CD4-positive, alpha-beta memory T cell (primary cell): ENCODE measurements at regions of chr11 and their contacts with region 1.

Region 1: GRCh38 chr11:61129639-61130523 is 27.6 kb downstream of the CD5 start:
- DNase-seq: peak; percentile 87 to 91 (median 89)
- H3K4me3 ChIP-seq: peak overlapping the region in 1 of 2 donors; percentile 10
- H3K4me3 Mint-ChIP-seq: peak overlapping the region in 7 of 8 donors; percentile 3 to 66 (median 53)
- H3K27ac ChIP-seq: peak overlapping the region; percentile 19
- H3K27ac Mint-ChIP-seq: peak overlapping the region; percentile 14 to 87 (median 53)
- H3K4me1 ChIP-seq: peaks cover 18% of the 10 kb centered on the region
- H3K4me1 Mint-ChIP-seq: peaks cover 11 to 37% (median 16%) of the 10 kb centered on the region in 4 donors
- H3K27me3 ChIP-seq: no peaks in the 10 kb centered on the region
- H3K27me3 Mint-ChIP-seq: no peaks in the 10 kb centered on the region

Region 2: GRCh38 chr11:60492488-60493009 is 637.3 kb before region 1 on chr11 and contains the start of gene MS4A12:
- CTCF ChIA-PET with region 1: no interaction called
- POLR2A ChIA-PET with region 1: no interaction called
- intact Hi-C with region 1: no loop called
- DNase-seq: no peak
- H3K4me3 ChIP-seq: no peak within 1 kb of the TSS
- H3K4me3 Mint-ChIP-seq: no peak within 1 kb of the TSS
- H3K27ac ChIP-seq: no peak within 1 kb of the TSS
- H3K27ac Mint-ChIP-seq: peak within 1 kb of the TSS in 1 of 7 donors; percentile 34
- H3K4me1 ChIP-seq: no peaks in the 10 kb centered on the region
- H3K4me1 Mint-ChIP-seq: peaks cover 0 to 4% (median 0%) of the 10 kb centered on the region in 4 donors
- H3K27me3 ChIP-seq: no peaks in the 10 kb centered on the region
- H3K27me3 Mint-ChIP-seq: peaks cover 9 to 14% of the 10 kb centered on the region in 2 donors
- total RNA-seq, gene MS4A12: not detected

Region 3: DNA sequence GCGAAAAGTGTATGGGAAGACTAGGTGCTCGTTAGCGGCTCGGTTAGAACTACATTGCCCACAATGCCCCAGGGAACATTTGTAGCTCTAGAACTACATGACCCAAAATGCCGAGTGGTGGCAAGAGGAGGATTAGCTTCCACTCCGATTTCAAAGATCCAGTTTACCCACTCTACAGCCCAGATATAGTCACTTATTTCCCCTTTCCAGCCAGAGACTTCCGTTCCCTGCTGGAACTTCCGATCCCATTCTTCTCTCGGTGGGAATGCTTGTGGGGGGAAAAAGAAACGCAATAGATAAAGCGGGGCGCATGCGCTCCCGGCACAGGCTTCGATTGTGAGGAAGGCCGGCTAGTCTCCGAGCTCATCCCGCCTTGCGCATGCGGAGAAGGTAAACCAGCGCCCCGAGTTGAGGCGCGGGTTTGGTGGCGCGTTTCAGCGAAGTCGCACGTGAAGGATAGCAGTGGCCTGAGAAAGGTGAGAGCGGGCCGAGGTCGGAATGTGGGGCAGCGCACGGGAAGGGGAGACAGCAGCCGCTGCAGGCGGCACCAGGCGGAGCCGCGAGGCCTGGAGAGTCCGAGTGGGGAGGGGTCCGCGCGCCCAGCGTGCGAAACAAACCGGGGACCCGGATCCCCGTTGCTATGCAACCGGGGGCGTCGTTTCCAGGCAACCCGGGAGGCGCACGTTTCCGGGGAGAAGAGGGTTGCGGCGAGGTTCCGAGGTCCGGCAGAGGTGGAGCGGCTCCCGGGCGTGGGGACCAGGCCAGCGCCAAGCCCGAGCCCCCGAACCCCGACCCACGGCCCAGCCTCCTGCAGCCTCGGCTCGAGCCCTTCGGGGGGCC is 215.9 kb before region 1 on chr11 and contains the start of gene TMEM109:
- CTCF ChIA-PET with region 1: interaction called, 7 read pairs
- POLR2A ChIA-PET with region 1: interaction called, 22 read pairs
- intact Hi-C with region 1: loop called (anchors 2 kb)
- DNase-seq: peak; percentile 90 to 92 (median 91)
- H3K4me3 ChIP-seq: peak within 1 kb of the TSS; percentile 79 to 96
- H3K4me3 Mint-ChIP-seq: peak within 1 kb of the TSS; percentile 92 to 100 (median 98)
- H3K27ac ChIP-seq: peak within 1 kb of the TSS; percentile 96
- H3K27ac Mint-ChIP-seq: peak within 1 kb of the TSS; percentile 87 to 99 (median 98)
- H3K4me1 ChIP-seq: peaks cover 47% of the 10 kb centered on the region
- H3K4me1 Mint-ChIP-seq: peaks cover 31 to 65% (median 44%) of the 10 kb centered on the region in 4 donors
- H3K27me3 ChIP-seq: no peaks in the 10 kb centered on the region
- H3K27me3 Mint-ChIP-seq: no peaks in the 10 kb centered on the region
- total RNA-seq, gene TMEM109: 66.9 to 68.0 TPM

Region 4: DNA sequence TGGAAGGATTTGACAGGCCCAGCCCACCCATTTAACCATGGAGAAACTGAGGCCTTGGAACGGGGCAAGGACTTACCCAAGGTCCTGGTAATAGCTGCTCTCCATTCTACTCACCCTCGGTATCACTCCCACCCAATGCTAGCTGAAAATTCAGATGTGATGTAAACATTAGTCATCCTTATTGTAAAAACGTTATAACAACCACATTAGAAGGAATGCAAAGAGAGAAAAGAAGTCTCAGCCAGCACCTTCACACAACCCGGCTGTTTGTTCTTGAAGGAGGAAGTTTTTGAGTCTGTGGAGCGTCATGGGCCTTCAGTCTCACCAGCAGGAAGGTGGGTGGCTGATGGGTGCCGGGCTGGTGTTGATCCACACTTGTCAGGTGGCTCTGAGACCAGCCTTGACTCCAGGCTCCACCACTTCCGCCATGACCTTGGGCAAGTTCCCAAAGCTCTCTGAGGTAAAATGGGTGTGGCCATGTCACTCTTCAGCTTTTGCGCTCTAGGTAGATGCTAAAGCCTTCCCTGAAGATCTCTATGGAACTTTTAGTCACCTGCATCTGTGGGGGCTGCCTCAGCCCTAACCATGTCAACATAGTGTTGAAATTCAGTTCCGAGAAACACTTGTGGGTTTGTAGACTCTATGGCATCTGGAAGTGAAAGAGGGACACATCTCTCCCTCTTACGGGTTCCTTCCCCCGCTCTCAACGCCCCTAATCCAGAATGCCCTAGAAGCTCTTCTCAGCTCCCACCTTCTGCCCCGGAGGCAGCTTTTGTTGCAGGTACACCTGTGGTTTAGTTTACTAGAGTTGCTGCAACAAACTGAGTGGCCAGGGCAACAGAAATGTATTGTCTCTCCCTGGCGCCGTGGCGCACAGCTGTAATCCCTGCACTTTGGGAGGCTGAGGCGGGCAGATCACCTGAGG is 143.6 kb before region 1 on chr11:
- CTCF ChIA-PET with region 1: interaction called, 6 read pairs
- POLR2A ChIA-PET with region 1: interaction called, 18 read pairs
- intact Hi-C with region 1: loop called (anchors 1 kb)
- DNase-seq: peak; percentile 92 to 99 (median 97)
- H3K4me3 ChIP-seq: peak overlapping the region in 1 of 2 donors; percentile 39
- H3K4me3 Mint-ChIP-seq: peak overlapping the region; percentile 61 to 87 (median 78)
- H3K27ac ChIP-seq: peak overlapping the region; percentile 92
- H3K27ac Mint-ChIP-seq: peak overlapping the region; percentile 88 to 100 (median 97)
- H3K4me1 ChIP-seq: peaks cover 94% of the 10 kb centered on the region
- H3K4me1 Mint-ChIP-seq: peaks cover 69 to 96% (median 86%) of the 10 kb centered on the region in 4 donors
- H3K27me3 ChIP-seq: no peaks in the 10 kb centered on the region
- H3K27me3 Mint-ChIP-seq: no peaks in the 10 kb centered on the region

Region 5: GRCh38 chr11:61061081-61061826 is 68.6 kb before region 1 on chr11:
- CTCF ChIA-PET with region 1: no interaction called
- POLR2A ChIA-PET with region 1: interaction called, 14 read pairs
- intact Hi-C with region 1: no loop called
- DNase-seq: peak; percentile 60 to 97 (median 65)
- H3K4me3 ChIP-seq: peak overlapping the region; percentile 17 to 48
- H3K4me3 Mint-ChIP-seq: peak overlapping the region; percentile 72 to 93 (median 86)
- H3K27ac ChIP-seq: peak overlapping the region; percentile 69
- H3K27ac Mint-ChIP-seq: peak overlapping the region; percentile 94 to 99 (median 97)
- H3K4me1 ChIP-seq: peaks cover 75% of the 10 kb centered on the region
- H3K4me1 Mint-ChIP-seq: peaks cover 59 to 91% (median 66%) of the 10 kb centered on the region in 4 donors
- H3K27me3 ChIP-seq: no peaks in the 10 kb centered on the region
- H3K27me3 Mint-ChIP-seq: no peaks in the 10 kb centered on the region

Region 6: DNA sequence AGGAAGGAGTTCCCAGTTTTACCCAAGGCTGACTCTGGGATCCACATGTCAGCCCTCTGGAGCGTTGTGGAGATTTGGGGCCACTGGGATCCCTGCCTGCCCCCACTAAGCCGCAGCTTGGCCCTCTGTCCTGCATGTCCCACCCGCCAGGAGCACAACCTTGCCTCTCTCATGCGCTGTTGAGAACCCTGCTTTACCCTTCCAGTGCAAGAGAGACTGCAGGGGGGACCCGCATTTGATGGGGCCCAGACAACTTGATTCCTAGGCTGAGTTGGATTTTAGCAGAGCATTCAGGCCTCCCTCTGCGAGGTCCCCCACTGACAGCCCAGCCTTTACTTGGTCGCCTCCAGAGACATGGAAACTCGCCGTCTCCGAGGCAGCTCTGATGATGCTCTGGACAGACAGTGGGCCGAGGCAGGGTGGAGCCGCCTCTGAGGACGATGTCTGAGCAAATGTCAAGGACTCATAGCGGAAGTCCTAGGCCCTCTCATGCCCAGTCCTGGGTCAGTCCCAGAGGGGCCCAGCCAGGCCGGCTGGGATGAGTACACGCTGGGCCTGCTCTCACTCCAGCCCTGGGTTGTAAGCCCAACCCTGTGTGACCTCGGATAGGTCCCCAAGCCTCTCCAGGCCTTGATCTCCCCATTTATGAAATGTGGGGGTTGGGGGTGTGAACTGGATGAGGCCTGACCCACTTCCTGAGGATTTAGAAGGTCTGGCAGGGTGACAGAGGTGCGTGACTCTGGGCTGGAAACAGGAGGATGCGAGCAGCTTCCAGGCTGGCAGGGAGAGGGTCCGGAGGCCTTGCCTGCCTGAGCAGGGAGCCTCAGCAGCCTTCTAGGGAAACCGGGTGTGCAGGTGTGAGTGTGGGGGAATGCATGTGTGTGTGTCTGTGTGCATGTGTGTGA is 27.0 kb before region 1 on chr11:
- CTCF ChIA-PET with region 1: interaction called, 3 read pairs
- POLR2A ChIA-PET with region 1: interaction called, 7 read pairs
- intact Hi-C with region 1: loop called (anchors 2 kb)
- DNase-seq: peak; percentile 34 to 63 (median 47)
- H3K4me3 ChIP-seq: peak overlapping the region; percentile 99 to 100
- H3K4me3 Mint-ChIP-seq: no peak overlapping the region
- H3K27ac ChIP-seq: peak overlapping the region; percentile 100
- H3K27ac Mint-ChIP-seq: no peak overlapping the region
- H3K4me1 ChIP-seq: peaks cover 64% of the 10 kb centered on the region
- H3K4me1 Mint-ChIP-seq: peaks cover 0 to 47% (median 28%) of the 10 kb centered on the region in 4 donors
- H3K27me3 ChIP-seq: no peaks in the 10 kb centered on the region
- H3K27me3 Mint-ChIP-seq: no peaks in the 10 kb centered on the region

Region 7: GRCh38 chr11:61187505-61188130 is 57.7 kb after region 1 on chr11:
- CTCF ChIA-PET with region 1: interaction called, 17 read pairs
- POLR2A ChIA-PET with region 1: interaction called, 3 read pairs
- intact Hi-C with region 1: loop called (anchors 1 kb)
- DNase-seq: peak; percentile 66 to 73 (median 71)
- H3K4me3 ChIP-seq: no peak overlapping the region
- H3K4me3 Mint-ChIP-seq: no peak overlapping the region
- H3K27ac ChIP-seq: no peak overlapping the region
- H3K27ac Mint-ChIP-seq: no peak overlapping the region
- H3K4me1 ChIP-seq: no peaks in the 10 kb centered on the region
- H3K4me1 Mint-ChIP-seq: peaks cover 0 to 3% (median 0%) of the 10 kb centered on the region in 4 donors
- H3K27me3 ChIP-seq: no peaks in the 10 kb centered on the region
- H3K27me3 Mint-ChIP-seq: peaks cover 3 to 9% of the 10 kb centered on the region in 2 donors